GM13977 (cell line): ENCODE measurements at regions of chr10 and their contacts with region 1.

Region 1: DNA sequence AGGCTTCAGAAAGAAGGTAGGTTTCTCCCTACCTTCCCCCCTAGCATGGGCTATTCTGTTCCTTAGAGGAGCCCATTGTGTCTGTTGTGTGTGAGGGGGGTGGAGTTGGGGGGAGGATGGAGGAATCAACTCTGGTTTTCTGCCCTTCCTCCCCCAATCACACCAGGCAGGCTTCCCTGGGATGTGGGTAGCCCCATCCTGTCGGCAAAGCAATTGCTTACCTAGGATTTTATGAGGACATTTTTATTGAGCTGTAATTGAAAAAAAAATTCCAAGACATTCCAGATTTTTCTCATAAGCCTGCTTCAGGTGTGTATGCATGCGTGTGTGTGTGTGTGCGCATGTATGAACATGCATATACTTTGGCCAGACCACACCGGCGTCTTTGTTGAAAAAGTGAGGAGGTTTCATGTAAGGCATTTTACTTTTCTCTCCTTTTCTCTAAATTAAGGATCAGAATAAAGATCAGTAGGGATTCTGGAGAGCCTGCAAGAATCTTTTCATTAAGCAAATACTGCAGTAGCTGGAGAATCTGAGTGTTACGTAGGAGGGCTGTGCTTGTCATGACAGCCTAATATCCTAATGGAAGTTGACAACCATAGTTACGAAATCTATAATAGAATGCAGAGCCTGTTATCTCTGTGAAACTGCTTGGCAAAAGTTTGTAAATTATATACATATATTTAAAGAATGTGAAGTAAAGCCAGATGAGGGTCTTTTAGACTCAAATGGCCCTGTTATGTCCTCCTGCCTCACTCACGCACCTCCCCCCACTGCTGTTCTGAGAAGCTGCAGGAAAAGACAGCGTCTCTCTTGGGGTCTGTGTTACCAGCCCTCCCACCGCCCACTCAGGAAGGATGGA is 27.3 kb upstream of the SAMD8 start:
- DNase-seq: no peak
- CTCF ChIP-seq: no peak

Region 2: DNA sequence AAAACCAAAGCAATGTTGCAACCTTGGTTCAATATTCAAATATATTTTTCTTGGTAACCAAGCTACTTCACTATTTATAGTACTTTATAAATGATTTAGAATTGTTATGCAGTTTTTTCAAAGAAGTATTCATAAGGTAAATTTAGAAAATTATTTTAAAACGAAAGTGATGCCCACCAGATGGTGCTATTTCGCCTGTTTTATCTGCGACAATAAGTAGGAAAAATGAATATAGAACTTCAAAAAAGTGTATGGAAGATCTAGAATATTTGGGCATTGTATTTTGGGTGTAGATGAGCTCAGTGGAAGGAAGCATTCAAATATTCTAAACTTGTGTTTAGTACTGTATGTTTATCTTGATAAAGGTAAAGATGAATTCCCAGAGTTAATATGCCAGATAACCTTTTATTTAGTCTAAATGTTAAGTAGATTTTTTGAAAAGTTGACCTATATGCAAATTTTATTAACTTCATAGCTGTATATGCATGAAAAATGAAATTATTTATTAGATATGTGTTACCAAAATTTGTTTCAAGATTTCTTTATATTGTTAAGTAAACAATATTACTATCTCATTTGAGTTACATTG is 840.0 kb before region 1 on chr10:
- in situ Hi-C with region 1: loop called (anchors 10 kb)
- DNase-seq: no peak
- CTCF ChIP-seq: peak; percentile 46

Region 3: GRCh38 chr10:75250910-75251309 is 166.7 kb after region 1 on chr10:
- in situ Hi-C with region 1: no loop called
- DNase-seq: no peak
- CTCF ChIP-seq: no peak

Region 4: GRCh38 chr10:75922435-75922834 is 838.2 kb after region 1 on chr10:
- in situ Hi-C with region 1: no loop called
- DNase-seq: no peak
- CTCF ChIP-seq: no peak